OCI-LY7 (cell line): ENCODE measurements at regions of chr9 and their contacts with region 1.

Region 1: GRCh38 chr9:110048403-110048975 is 159.5 kb downstream of the C9orf152 start:
- DNase-seq: peak; percentile 88
- H3K4me3 ChIP-seq: peak overlapping the region; percentile 86
- H3K27ac ChIP-seq: peak overlapping the region; percentile 53
- H3K4me1 ChIP-seq: peaks cover 47% of the 10 kb centered on the region
- CTCF ChIP-seq: no peak

Region 2: GRCh38 chr9:109972026-109972882 is 76.2 kb before region 1 on chr9:
- CTCF ChIA-PET with region 1: no interaction called
- POLR2A ChIA-PET with region 1: interaction called, 14 read pairs
- intact Hi-C with region 1: loop called (anchors 1 kb)
- DNase-seq: peak; percentile 94
- H3K4me3 ChIP-seq: peak overlapping the region; percentile 37
- H3K27ac ChIP-seq: peak overlapping the region; percentile 98
- H3K4me1 ChIP-seq: peaks cover 100% of the 10 kb centered on the region
- CTCF ChIP-seq: peak; percentile 87

Region 3: DNA sequence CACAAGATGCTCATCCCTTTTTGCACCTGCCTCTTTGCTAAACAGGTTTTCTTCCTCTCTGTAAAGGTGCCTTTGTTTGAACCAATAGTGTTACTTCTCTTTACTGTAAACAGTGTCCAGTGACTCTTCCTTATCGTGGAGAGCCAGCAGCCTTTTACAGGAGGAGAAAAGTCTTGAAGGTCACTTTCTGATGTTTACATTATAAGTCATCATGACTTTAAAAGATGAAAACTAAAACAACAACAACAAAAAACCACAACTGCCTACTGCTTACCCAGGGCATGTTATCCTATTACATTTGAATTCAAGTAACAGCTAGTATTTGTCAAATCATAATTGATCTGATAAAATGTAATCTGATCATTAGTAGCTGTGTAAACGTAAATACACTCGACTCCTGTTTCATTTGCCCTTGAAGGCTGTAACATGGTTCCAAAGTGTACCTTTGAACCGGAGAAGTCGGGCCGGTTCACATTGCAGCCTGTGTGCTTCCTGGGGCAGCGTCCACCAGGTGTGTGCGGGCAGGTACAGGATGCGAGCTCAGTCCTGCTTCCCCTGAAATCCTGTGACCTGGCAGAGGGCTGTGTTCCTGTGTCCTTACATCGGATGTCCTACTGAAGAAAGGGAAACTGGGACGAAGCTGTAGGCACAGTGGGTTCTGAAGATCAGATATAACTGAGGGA is 41.3 kb after region 1 on chr9:
- CTCF ChIA-PET with region 1: no interaction called
- POLR2A ChIA-PET with region 1: no interaction called
- intact Hi-C with region 1: no loop called
- DNase-seq: no peak
- H3K4me3 ChIP-seq: no peak overlapping the region
- H3K27ac ChIP-seq: no peak overlapping the region
- H3K4me1 ChIP-seq: peaks cover 32% of the 10 kb centered on the region
- CTCF ChIP-seq: no peak

Region 4: GRCh38 chr9:110133608-110134210 is 85.2 kb after region 1 on chr9:
- CTCF ChIA-PET with region 1: no interaction called
- POLR2A ChIA-PET with region 1: interaction called, 14 read pairs
- intact Hi-C with region 1: loop called (anchors 1 kb)
- DNase-seq: no peak
- H3K4me3 ChIP-seq: no peak overlapping the region
- H3K27ac ChIP-seq: peak overlapping the region; percentile 95
- H3K4me1 ChIP-seq: peaks cover 60% of the 10 kb centered on the region
- CTCF ChIP-seq: no peak